ENCODE measurements at regions of chr10 and their contacts with region 1.

Region 1: DNA sequence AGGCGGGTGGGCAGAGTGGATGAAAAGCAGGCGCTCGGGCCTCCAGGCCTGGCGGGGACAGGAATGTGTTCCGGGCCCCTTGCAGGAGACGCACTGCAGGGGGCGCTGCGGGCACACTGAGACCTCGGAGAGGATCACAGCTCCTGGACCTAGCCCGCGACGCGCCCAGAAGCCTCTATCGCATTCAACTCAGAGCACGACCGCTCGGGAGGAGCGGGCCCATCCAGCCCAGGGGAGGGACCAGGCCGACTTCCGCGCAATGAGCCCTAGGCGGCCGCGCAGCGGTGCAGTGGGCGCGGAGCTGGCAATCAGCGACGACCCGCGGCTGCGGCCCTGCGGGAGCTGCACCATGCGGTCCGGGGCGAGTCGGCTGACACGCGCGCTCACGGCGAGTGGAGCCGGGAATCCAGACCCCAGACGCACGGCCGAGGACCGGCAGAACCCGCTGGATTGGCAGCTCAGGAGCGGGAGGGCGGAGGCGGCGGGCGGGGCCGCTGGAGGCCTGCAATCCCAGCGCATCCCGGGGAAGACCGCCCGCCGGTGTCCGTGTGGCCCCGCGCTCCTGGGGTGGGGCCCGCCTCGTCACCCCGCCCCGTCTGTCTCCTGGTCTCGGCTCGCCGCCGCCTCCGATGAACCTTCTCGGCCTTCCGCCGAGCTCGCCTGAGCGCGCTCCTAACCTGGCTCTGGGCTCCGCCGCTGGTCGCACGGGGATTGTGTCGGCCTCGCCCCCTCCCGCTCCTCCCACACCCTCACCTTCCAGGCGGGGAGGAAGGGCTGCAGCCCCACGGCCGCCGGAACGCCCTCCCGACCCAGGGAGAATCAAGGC is 33.5 kb upstream of the GRID1 start:
- DNase-seq: peak; percentile 70
- H3K4me3 ChIP-seq: peak overlapping the region; percentile 59
- H3K27me3 ChIP-seq: peaks cover 2% of the 10 kb centered on the region; the same call in 1 of the 2 replicates
- CTCF ChIP-seq: peak; percentile 94

Region 2: GRCh38 chr10:86389441-86390193 is 10.5 kb before region 1 on chr10:
- CTCF ChIA-PET with region 1: interaction called, 5 read pairs
- POLR2A ChIA-PET with region 1: interaction called, 11 read pairs
- DNase-seq: no peak
- H3K4me3 ChIP-seq: peak overlapping the region; percentile 24
- H3K27me3 ChIP-seq: peaks cover 14% of the 10 kb centered on the region
- CTCF ChIP-seq: no peak

Region 3: GRCh38 chr10:86411281-86411841 is 11.3 kb after region 1 on chr10:
- CTCF ChIA-PET with region 1: interaction called, 24 read pairs
- POLR2A ChIA-PET with region 1: no interaction called
- DNase-seq: peak; percentile 93
- H3K4me3 ChIP-seq: no peak overlapping the region
- H3K27me3 ChIP-seq: no peaks in the 10 kb centered on the region
- CTCF ChIP-seq: no peak

Region 4: GRCh38 chr10:86585037-86585725 is 185.1 kb after region 1 on chr10:
- CTCF ChIA-PET with region 1: interaction called, 56 read pairs
- POLR2A ChIA-PET with region 1: no interaction called
- DNase-seq: no peak
- H3K4me3 ChIP-seq: no peak overlapping the region
- H3K27me3 ChIP-seq: 0 out of 2 replicates have a peak, but pooled peaks cover 2% of the 10 kb centered on the region
- CTCF ChIP-seq: peak; percentile 93